Breast epithelium (tissue), 4 donors: ENCODE measurements at regions of chr11 and their contacts with region 1.

Region 1: GRCh38 chr11:99920956-99921355 is 766.1 kb upstream of the ARHGAP42 start:
- DNase-seq: no peak
- H3K4me3 ChIP-seq: no peak overlapping the region
- H3K27ac ChIP-seq: no peak overlapping the region
- H3K4me1 ChIP-seq: no peaks in the 10 kb centered on the region
- H3K27me3 ChIP-seq: no peaks in the 10 kb centered on the region
- CTCF ChIP-seq: no peak
- POLR2A ChIP-seq: no peak

Region 2: GRCh38 chr11:99884750-99885149 is 36.2 kb before region 1 on chr11:
- intact Hi-C with region 1: loop called (anchors 2 kb)
- DNase-seq: no peak
- H3K4me3 ChIP-seq: no peak overlapping the region
- H3K27ac ChIP-seq: no peak overlapping the region
- H3K4me1 ChIP-seq: no peaks in the 10 kb centered on the region
- H3K27me3 ChIP-seq: no peaks in the 10 kb centered on the region
- CTCF ChIP-seq: no peak
- POLR2A ChIP-seq: no peak

Region 3: DNA sequence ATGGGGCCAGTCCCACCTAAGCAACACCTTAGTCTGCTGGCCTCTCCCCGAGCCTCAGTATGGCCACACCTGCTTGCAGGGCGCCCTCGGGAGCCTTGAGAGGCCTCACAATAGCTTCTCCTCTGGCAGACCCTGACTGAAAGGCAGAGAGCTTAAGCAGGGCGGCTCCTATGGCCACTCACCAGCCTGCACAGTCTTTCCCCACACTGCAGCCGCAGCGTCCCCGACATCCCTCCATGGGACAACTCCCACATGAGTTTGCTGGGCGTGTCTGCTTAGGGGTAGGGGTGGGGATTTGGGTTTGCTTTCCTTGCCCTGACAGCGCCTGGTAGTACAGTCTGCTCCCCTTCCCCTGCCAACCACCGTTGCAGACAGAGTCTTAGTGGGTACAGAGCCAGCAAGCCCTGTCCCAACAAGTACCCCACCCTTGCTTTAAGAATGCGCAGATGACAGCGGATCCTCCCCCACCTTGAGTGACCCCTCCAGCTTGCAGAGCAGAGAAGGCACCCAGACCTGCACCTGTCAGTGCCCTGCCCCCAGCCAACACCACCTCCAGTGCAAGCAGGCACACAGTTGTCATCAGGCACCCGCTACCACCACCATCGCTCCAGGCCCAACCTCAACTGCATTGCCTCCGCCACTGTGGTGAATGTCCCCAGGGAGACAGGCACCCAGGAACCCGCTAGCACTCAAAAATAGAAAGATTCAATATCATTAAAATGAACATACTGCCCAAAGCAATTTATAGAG is 352.3 kb after region 1 on chr11:
- intact Hi-C with region 1: no loop called
- DNase-seq: no peak
- H3K4me3 ChIP-seq: no peak overlapping the region
- H3K27ac ChIP-seq: no peak overlapping the region
- H3K4me1 ChIP-seq: no peaks in the 10 kb centered on the region
- H3K27me3 ChIP-seq: no peaks in the 10 kb centered on the region
- CTCF ChIP-seq: no peak
- POLR2A ChIP-seq: no peak